OCI-LY7 (cell line): ENCODE measurements at regions of chr7 and their contacts with region 1.

Region 1: GRCh38 chr7:149028346-149029109 is at the start of gene PDIA4:
- DNase-seq: peak; percentile 98
- H3K4me3 ChIP-seq: peak within 1 kb of the TSS; percentile 96
- H3K27ac ChIP-seq: peak within 1 kb of the TSS; percentile 84
- H3K4me1 ChIP-seq: peaks cover 31% of the 10 kb centered on the region
- CTCF ChIP-seq: no peak
- total RNA-seq, gene PDIA4: 130 TPM in 2 replicates

Region 2: DNA sequence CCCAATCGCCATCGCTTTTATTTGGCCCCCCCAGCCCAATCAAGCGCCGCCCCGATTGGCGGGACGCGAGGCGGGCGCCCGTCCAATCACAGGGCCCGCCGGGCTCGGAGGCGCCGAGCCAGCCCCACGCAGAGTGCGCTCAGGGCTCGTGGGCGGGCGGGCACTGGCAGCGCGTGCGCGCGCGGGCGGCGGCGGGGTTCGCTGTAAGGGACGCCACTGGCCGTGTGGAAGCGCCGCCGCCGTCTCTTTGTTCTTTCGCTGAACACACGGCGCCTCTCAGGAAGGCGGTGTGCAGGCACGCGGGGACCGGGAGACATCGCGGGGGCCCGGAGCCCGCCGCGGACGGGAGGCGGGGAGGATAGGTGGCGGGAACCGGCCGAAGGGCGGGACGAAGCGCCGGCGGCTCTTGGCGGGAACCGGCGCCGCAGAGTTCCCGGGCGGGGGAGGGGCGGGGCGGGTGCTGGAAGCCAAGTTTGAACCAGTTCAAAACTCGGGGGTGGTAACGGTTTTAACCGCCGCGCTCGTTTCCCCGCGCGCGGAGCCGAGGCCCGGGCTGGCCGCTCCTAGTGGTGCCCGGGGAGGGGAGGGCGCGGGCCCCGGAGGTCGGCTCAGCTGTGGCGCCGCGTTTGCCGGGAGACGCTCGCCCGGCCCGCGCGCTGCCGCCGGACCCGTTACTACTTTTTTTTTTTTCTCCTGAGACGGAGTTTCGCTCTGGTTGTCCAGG is 144.1 kb before region 1 on chr7:
- CTCF ChIA-PET with region 1: no interaction called
- POLR2A ChIA-PET with region 1: interaction called, 4 read pairs
- intact Hi-C with region 1: loop called (anchors 2 kb)
- DNase-seq: peak; percentile 96
- H3K4me3 ChIP-seq: peak overlapping the region; percentile 91
- H3K27ac ChIP-seq: peak overlapping the region; percentile 88
- H3K4me1 ChIP-seq: peaks cover 25% of the 10 kb centered on the region
- CTCF ChIP-seq: no peak

Region 3: DNA sequence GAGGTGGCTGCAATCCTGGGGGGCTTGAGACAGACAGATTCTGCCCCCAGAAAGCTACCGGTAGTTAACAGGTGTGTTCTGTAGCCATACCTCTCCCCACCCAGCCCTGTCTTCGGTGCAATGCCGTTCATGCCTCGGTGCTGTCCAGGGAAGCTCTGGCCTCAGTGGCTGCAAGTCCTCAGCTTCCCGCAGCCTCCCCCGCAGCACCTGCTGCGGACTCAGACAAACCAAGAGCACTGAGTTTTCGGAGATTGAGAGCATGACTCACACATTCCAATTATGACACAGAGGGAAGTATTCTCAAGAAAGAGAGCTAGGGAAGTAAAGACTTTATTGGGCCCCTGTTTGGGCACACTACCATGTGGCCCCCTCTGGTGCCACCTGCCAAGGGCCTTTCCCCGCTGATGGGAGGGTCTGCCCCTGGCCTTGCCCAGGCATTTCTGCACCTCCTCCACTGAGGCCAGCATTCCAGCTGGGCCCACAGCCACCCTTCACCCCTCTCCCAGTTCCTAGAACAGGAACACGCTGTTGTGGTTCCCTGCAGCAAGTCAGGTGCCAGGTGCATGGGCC is 114.2 kb before region 1 on chr7:
- CTCF ChIA-PET with region 1: no interaction called
- POLR2A ChIA-PET with region 1: no interaction called
- intact Hi-C with region 1: no loop called
- DNase-seq: no peak
- H3K4me3 ChIP-seq: no peak overlapping the region
- H3K27ac ChIP-seq: no peak overlapping the region
- H3K4me1 ChIP-seq: peaks cover 33% of the 10 kb centered on the region
- CTCF ChIP-seq: no peak

Region 4: GRCh38 chr7:149067876-149068275 is 39.3 kb after region 1 on chr7:
- CTCF ChIA-PET with region 1: interaction called, 10 read pairs
- POLR2A ChIA-PET with region 1: interaction called, 4 read pairs
- intact Hi-C with region 1: loop called (anchors 1 kb)
- DNase-seq: peak; percentile 39
- H3K4me3 ChIP-seq: no peak overlapping the region
- H3K27ac ChIP-seq: no peak overlapping the region
- H3K4me1 ChIP-seq: peaks cover 9% of the 10 kb centered on the region
- CTCF ChIP-seq: peak; percentile 69

Region 5: DNA sequence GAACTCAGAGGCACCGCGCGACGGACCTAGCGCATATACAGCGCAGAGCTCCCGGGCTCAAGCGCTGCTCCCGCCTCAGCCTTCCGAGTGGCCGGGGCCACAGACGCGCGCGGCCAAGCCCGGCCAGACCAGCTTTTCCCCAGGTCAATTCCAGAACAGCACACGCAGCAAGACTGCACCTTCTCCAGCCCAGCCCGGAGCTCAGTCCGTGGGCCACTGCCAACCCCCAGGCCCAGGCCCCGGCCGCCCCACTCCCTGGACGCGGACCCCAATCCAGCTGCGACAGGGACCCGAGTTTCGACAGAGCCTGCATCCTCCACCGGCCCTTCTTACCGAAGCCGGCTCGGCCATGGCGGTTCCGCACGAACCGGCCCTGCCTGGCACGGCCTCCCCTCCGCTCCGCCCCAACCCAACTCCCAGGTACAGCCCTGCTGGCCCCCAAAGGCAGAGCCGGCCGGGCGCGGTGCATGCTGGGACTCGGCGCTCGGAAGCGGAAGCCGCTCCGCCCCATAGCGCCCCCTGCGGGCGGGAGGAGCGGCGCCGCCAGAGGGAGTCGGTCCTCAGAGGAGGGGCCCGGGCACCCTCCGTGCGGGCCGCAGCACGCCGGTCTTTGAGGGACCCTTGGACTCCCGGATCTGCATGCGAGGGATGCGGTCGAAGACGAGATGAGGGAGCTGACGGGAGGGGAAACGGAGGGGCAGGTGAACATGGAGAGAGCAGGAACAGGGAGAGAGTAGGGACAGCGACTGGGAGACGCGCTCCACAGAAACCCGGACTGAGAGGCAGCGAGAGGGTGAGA is 97.5 kb after region 1 on chr7 and contains the start of gene ZNF425:
- CTCF ChIA-PET with region 1: no interaction called
- POLR2A ChIA-PET with region 1: interaction called, 4 read pairs
- intact Hi-C with region 1: loop called (anchors 1 kb)
- DNase-seq: peak; percentile 95
- H3K4me3 ChIP-seq: peak within 1 kb of the TSS; percentile 84
- H3K27ac ChIP-seq: peak within 1 kb of the TSS; percentile 70
- H3K4me1 ChIP-seq: peaks cover 13% of the 10 kb centered on the region
- CTCF ChIP-seq: peak; percentile 87
- total RNA-seq, gene ZNF425: 0.28 and 1.4 TPM in 2 replicates

Region 6: DNA sequence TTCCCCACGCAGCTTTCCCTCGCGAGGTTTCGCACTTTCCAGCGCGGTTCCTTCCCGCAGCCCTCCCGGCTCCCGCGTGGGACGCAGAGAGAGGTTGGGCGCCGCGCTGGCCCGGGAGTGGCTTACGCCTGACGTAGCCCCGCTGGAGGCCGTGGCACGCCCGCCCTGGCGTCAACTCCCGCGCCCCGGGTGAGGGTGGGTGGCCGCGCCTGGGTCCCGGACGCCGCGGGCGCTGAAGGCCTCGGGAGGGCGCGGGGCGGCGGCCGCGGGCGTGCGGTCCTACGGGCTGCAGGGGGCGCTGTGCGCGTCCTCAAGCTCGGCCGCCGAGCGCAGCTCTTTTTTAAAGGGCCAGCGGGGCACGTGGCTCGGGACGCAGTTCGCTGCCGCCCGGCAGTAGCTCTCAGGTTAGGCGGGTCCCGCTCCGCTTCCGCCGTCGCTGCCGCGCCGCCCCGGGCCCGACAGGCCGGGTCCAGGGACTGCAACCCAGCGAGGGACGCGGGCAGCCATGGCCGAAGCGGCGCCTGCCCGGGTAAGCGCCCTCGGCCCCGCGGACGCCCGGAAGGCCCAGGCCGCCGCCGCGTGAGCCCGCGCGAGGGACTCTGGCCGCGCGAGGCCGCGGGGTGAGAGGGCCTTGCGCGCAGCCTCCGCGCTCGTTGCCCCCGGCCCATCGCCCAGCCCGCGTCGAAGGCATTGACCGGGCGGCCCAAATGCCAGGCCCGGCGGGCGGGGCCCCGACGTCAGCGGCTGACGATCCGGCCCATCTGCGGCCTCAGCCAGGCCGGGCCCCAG is 233.5 kb after region 1 on chr7 and contains the start of gene ZNF783:
- CTCF ChIA-PET with region 1: no interaction called
- POLR2A ChIA-PET with region 1: no interaction called
- intact Hi-C with region 1: loop called (anchors 5 kb)
- DNase-seq: peak; percentile 94
- H3K4me3 ChIP-seq: peak within 1 kb of the TSS; percentile 76
- H3K27ac ChIP-seq: no peak within 1 kb of the TSS
- H3K4me1 ChIP-seq: peaks cover 19% of the 10 kb centered on the region
- CTCF ChIP-seq: peak; percentile 80
- total RNA-seq, gene ZNF783: 10.5 and 13.1 TPM in 2 replicates